MCF 10A (cell line): ENCODE measurements at regions of chr12 and their contacts with region 1.

Region 1: GRCh38 chr12:1795785-1796514 is 24.4 kb upstream of the LRTM2 start:
- DNase-seq: peak; percentile 84
- H3K4me3 Mint-ChIP-seq: peak overlapping the region; percentile 74
- H3K27ac Mint-ChIP-seq: no peak overlapping the region
- H3K4me1 Mint-ChIP-seq: peaks cover 11% of the 10 kb centered on the region
- H3K27me3 Mint-ChIP-seq: no peaks in the 10 kb centered on the region
- CTCF ChIP-seq: peak; percentile 92

Region 2: GRCh38 chr12:1634590-1635191 is 161.3 kb before region 1 on chr12:
- CTCF ChIA-PET with region 1: interaction called, 75 read pairs
- POLR2A ChIA-PET with region 1: interaction called, 6 read pairs
- intact Hi-C with region 1: loop called (anchors 1 kb)
- DNase-seq: peak; percentile 77
- H3K4me3 Mint-ChIP-seq: no peak overlapping the region
- H3K27ac Mint-ChIP-seq: no peak overlapping the region
- H3K4me1 Mint-ChIP-seq: peaks cover 5% of the 10 kb centered on the region
- H3K27me3 Mint-ChIP-seq: peaks cover under 1% of the 10 kb centered on the region
- CTCF ChIP-seq: peak; percentile 78

Region 3: GRCh38 chr12:1650260-1650977 is 145.5 kb before region 1 on chr12:
- CTCF ChIA-PET with region 1: interaction called, 341 read pairs
- POLR2A ChIA-PET with region 1: interaction called, 6 read pairs
- intact Hi-C with region 1: loop called (anchors 1 kb)
- DNase-seq: no peak
- H3K4me3 Mint-ChIP-seq: no peak overlapping the region
- H3K27ac Mint-ChIP-seq: no peak overlapping the region
- H3K4me1 Mint-ChIP-seq: peaks cover 2% of the 10 kb centered on the region
- H3K27me3 Mint-ChIP-seq: peaks cover 10% of the 10 kb centered on the region
- CTCF ChIP-seq: no peak

Region 4: GRCh38 chr12:1698638-1699214 is 97.2 kb before region 1 on chr12:
- CTCF ChIA-PET with region 1: interaction called, 23 read pairs
- POLR2A ChIA-PET with region 1: no interaction called
- intact Hi-C with region 1: no loop called
- DNase-seq: no peak
- H3K4me3 Mint-ChIP-seq: no peak overlapping the region
- H3K27ac Mint-ChIP-seq: no peak overlapping the region
- H3K4me1 Mint-ChIP-seq: peaks cover 25% of the 10 kb centered on the region
- H3K27me3 Mint-ChIP-seq: no peaks in the 10 kb centered on the region
- CTCF ChIP-seq: no peak

Region 5: DNA sequence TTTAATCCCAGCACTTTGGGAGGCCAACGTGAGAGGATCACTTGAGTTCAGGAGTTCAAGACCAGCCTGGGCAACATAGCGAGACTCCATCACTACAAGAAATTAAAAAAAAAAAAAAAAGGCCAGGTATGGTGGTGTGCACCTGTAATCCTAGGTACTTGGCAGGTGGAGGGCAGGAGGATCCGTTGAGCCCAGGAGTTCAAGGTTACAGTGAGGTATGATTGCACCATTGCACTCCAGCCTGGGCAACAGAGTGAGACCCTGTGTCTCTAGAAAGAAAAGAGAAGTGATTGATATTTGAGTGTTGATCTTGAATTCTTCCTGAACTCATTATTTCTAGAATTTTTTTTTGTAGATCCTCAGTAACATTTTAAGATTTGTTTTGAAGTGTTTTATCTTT is 45.6 kb before region 1 on chr12:
- CTCF ChIA-PET with region 1: no interaction called
- POLR2A ChIA-PET with region 1: no interaction called
- intact Hi-C with region 1: no loop called
- DNase-seq: no peak
- H3K4me3 Mint-ChIP-seq: no peak overlapping the region
- H3K27ac Mint-ChIP-seq: no peak overlapping the region
- H3K4me1 Mint-ChIP-seq: no peaks in the 10 kb centered on the region
- H3K27me3 Mint-ChIP-seq: no peaks in the 10 kb centered on the region
- CTCF ChIP-seq: no peak

Region 6: GRCh38 chr12:1776170-1776948 is 19.6 kb before region 1 on chr12:
- CTCF ChIA-PET with region 1: interaction called, 23 read pairs
- POLR2A ChIA-PET with region 1: interaction called, 3 read pairs
- intact Hi-C with region 1: no loop called
- DNase-seq: peak; percentile 89
- H3K4me3 Mint-ChIP-seq: peak overlapping the region; percentile 0
- H3K27ac Mint-ChIP-seq: peak overlapping the region; percentile 11
- H3K4me1 Mint-ChIP-seq: peaks cover 49% of the 10 kb centered on the region
- H3K27me3 Mint-ChIP-seq: no peaks in the 10 kb centered on the region
- CTCF ChIP-seq: no peak

Region 7: GRCh38 chr12:1859643-1860042 is 63.7 kb after region 1 on chr12:
- CTCF ChIA-PET with region 1: no interaction called
- POLR2A ChIA-PET with region 1: no interaction called
- intact Hi-C with region 1: no loop called
- DNase-seq: peak; percentile 71
- H3K4me3 Mint-ChIP-seq: no peak overlapping the region
- H3K27ac Mint-ChIP-seq: no peak overlapping the region
- H3K4me1 Mint-ChIP-seq: peaks cover 5% of the 10 kb centered on the region
- H3K27me3 Mint-ChIP-seq: peaks cover 14% of the 10 kb centered on the region
- CTCF ChIP-seq: no peak

Region 8: DNA sequence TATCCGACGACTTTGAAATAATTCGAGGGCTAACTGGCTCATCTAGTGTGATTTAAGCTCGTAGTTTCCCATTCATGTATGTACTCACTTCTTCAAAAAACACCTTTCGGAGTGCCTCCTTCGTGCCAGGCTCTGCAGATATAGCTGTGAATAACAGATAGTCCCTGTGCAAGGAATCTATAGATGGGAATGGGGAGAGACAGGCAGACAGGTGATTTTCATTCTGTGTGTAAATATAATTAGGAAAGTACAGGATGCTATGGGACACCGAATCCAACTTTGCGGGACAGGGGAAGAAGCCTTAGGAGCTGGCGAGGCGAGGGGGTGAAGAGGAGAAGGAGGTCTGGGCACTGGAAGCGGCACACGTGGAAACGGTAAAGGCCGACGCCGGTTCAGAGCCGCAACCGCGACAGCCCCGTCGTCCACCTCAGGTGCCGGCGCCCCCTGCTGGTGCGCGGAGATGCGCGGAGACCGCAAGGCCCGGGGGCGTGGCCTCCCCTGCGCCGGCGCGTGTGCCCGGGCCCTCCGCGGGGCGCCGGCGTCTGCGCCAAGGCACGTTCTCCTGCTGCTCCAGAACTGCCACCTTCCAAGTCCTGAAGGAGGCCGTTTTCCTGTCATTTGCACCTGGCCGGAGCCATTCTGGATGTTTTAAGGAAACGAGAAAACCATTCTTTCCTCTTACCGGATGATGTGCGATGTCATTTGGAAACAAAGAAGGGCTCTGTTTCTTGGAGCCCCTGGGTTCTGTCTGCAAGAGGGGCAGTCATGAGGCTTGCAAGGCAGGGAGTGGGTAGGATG is 238.9 kb after region 1 on chr12:
- CTCF ChIA-PET with region 1: interaction called, 8 read pairs
- POLR2A ChIA-PET with region 1: no interaction called
- intact Hi-C with region 1: loop called (anchors 1 kb)
- DNase-seq: peak; percentile 53
- H3K4me3 Mint-ChIP-seq: peak overlapping the region; percentile 40
- H3K27ac Mint-ChIP-seq: no peak overlapping the region
- H3K4me1 Mint-ChIP-seq: peaks cover 5% of the 10 kb centered on the region
- H3K27me3 Mint-ChIP-seq: peaks cover 86% of the 10 kb centered on the region
- CTCF ChIP-seq: peak; percentile 59